Tibial artery (tissue), 4 donors: ENCODE measurements at regions of chr17 and their contacts with region 1.

Region 1: GRCh38 chr17:40019140-40019991 is 4.1 kb downstream of the CSF3 start:
- DNase-seq: no peak
- H3K4me3 ChIP-seq: no peak overlapping the region
- H3K27ac ChIP-seq: peak overlapping the region; percentile 54 to 55
- H3K4me1 ChIP-seq: peaks cover 0 to 52% (median 19%) of the 10 kb centered on the region in 4 donors
- H3K27me3 ChIP-seq: no peaks in the 10 kb centered on the region
- CTCF ChIP-seq: no peak

Region 2: GRCh38 chr17:39822051-39822451 is 197.3 kb before region 1 on chr17:
- intact Hi-C with region 1: no loop called
- DNase-seq: no peak
- H3K4me3 ChIP-seq: no peak overlapping the region
- H3K27ac ChIP-seq: no peak overlapping the region
- H3K4me1 ChIP-seq: no peaks in the 10 kb centered on the region
- H3K27me3 ChIP-seq: peaks cover 0 to 30% of the 10 kb centered on the region in 2 donors
- CTCF ChIP-seq: no peak

Region 3: DNA sequence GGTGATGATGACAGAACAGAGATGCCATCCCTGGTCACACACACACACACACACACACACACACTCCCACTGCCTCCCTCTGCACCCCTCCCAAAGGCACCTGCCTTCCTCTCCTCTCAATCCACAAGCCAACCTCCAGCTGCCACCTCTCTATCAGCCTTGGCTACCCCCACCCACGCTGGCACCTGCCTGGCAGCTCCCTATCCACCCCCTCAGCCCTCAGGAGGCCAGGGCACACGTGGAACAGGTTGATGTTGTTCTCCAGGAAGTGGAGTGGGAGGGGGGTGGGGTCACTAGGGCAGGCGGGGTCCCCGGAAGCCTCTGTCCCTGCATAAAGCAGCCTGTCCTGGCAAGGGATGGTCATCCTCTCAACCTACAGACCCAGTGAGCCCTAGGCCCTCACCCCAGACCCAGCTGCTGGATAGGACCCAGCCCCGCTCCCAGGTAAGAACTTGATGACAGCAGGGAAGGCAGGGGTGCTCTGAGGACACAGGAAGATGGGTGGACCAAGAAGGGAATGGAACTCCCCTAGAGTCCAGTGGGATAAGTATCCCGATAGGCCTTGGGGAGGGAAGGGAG is 56.6 kb before region 1 on chr17 and contains the start of gene GSDMA:
- intact Hi-C with region 1: no loop called
- DNase-seq: no peak
- H3K4me3 ChIP-seq: no peak within 1 kb of the TSS
- H3K27ac ChIP-seq: no peak within 1 kb of the TSS
- H3K4me1 ChIP-seq: peaks cover 0 to 4% (median 1%) of the 10 kb centered on the region in 4 donors
- H3K27me3 ChIP-seq: peaks cover 0 to 31% of the 10 kb centered on the region in 2 donors
- CTCF ChIP-seq: no peak

Region 4: DNA sequence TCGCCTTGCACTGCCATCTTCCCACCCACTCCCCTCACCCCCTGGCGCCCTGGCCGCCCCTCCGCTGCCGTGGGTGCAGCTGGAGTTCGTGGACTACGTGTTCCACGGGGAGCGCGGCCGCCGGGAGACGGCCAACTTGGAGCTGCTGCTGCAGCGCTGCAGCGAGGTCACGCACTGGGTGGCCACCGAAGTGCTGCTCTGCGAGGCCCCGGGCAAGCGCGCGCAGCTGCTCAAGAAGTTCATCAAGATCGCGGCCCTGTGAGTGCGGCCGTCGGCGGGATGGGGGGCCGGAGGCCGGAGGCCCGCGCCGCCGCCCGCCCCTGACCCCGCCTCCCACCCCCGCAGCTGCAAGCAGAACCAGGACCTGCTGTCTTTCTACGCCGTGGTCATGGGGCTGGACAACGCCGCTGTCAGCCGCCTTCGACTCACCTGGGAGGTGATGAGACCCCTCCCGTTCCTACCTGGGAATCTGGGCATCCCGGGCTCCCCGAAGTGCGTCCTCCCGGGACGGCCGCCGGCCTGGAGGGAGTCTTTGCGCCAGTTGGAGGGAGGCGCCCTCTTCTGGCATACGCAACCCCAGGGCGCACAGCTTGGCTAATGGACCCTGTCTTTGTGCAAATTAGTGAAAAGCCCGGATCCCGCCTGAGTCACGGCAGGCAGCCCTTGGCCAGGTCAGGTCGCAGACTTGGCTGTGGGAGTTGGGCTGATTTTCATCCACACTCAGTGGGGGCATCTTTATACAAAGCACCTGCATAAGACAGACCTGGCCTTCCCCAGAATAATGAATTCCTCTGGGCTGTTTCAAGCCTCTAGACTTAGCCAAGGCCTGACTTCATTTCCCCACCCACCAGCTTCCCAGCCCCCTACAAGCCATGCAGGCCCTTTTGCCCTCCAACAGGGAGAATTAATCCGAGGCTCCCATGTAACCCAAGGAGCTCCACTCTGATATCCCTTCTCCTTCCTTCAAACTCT is 172.2 kb after region 1 on chr17:
- intact Hi-C with region 1: loop called (anchors 5 kb)
- DNase-seq: peak; percentile 82 to 88
- H3K4me3 ChIP-seq: peak overlapping the region; percentile 57 to 73
- H3K27ac ChIP-seq: peak overlapping the region; percentile 66 to 68
- H3K4me1 ChIP-seq: peaks cover 0 to 14% (median 10%) of the 10 kb centered on the region in 4 donors
- H3K27me3 ChIP-seq: no peaks in the 10 kb centered on the region
- CTCF ChIP-seq: peak; percentile 57 to 66

Region 5: GRCh38 chr17:40279407-40279806 is 260.0 kb after region 1 on chr17:
- intact Hi-C with region 1: loop called (anchors 10 kb)
- DNase-seq: no peak
- H3K4me3 ChIP-seq: no peak overlapping the region
- H3K27ac ChIP-seq: no peak overlapping the region
- H3K4me1 ChIP-seq: peaks cover 0 to 11% (median 3%) of the 10 kb centered on the region in 4 donors
- H3K27me3 ChIP-seq: no peaks in the 10 kb centered on the region
- CTCF ChIP-seq: no peak

Region 6: DNA sequence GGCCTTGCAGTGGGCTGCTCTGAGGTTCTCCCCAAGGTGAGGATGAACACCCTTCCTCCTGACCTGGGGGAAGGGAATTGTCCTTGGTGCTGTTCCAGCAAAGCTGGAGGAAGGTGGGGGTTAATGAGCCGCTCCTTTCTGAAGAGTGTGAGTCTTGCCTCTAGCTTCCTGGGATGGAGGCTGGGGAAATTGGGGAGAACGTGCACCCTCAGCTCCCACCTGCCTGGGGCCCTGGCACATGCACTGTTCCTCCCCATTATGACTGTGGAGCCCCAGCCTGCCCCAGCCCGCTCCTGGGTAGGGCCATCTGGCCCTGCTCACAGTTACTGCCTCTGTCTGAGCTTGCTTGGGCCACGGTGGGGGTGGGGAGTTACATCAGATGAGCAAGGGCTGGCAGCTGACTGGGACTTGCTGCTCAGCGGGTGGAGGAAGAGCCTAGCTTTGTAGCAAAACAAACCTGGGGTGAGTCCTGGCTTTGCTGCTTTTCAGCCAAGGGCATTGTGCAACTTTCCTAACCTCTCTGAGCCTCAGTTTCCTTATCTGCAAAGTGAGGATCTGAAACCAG is 471.0 kb after region 1 on chr17:
- intact Hi-C with region 1: no loop called
- DNase-seq: peak; percentile 85
- H3K4me3 ChIP-seq: no peak overlapping the region
- H3K27ac ChIP-seq: no peak overlapping the region
- H3K4me1 ChIP-seq: peaks cover 0 to 28% (median 0%) of the 10 kb centered on the region in 4 donors
- H3K27me3 ChIP-seq: no peaks in the 10 kb centered on the region
- CTCF ChIP-seq: no peak